Prostate gland (tissue), 2 donors: ENCODE measurements at regions of chr5 and their contacts with region 1.

Region 1: DNA sequence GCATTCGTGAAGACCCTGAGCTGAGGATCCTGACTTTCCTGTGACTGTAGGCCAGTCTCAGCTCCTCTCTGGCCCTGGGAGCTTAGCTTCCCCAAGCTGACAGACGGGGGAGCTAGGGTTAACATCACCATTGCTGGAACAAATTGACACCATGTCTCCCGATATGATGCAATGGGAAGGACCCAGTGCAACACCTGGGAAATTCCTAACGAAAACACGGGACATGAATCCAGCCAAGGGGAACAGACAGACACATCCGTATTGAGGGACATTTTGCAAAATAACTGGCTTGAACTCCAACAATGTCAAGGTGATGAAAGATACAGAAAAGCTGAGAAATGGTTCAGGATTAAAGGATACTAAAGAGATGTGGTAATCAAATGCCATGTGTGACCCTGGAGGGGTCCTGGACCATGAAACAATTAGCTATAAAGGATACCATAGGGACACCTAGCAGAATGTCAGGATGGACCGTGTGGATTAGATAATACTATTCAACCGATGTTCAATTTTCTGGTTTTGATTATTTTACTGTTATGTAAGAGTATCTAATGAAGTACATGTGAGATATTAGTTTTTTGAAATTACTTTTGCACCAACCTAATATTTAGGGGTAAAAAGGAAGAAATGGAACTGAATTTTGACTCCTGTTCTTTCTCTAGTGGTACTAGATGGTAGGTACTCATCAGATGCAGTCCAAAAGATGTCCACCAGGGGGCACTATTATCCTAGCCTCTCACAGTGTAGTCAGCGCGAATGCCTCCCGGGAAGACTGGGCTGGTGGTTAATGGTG is 52.7 kb downstream of the NDST1 start:
- DNase-seq: peak; percentile 91
- H3K4me3 ChIP-seq: no peak overlapping the region
- H3K27ac ChIP-seq: no peak overlapping the region
- H3K4me1 ChIP-seq: no peaks in the 10 kb centered on the region
- H3K27me3 ChIP-seq: no peaks in the 10 kb centered on the region
- CTCF ChIP-seq: peak; percentile 89 to 98 (median 94)
- POLR2A ChIP-seq: no peak

Region 2: DNA sequence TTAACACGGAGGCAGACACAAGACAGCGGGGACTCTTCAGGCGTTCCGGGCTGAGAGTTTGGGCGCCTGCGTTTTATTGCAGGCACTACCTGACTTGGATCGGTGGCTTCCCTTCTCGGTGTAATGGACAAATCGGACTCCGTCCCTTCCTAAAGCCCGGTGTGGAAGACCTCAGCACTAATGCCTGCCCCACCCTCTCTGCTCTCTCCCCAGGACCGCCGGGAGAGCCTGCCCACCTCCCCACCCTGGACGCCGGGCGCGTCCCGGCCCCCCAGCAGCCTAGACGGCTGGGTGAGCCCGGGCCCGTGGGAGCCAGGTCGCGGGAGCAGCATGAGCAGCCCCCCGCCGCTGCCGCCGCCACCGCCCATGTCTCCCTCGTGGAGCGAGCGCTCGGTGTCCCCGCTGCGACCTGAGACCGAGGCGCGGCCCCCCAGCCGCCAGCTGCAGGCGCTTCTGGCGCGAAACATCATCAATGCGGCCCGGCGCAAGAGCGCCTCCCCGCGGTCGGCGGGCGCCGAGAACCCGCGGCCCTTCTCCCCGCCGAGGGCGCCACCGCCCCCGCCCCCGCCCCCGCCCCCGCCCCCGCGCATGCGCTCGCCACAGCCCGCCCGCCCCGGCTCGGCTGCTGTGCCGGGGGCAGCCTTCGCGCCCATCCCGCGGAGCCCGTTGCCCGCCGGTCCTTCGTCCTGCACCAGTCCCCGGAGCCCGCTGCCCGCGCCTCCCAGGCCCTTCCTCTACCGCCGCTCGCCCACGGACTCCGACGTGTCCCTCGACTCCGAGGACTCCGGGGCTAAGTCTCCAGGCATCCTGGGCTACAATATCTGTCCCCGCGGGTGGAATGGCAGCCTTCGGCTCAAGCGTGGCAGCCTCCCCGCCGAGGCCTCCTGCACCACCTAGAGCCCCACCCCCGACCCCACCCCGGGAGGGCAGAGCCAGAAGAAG is 95.9 kb after region 1 on chr5:
- intact Hi-C with region 1: loop called (anchors 5 kb)
- DNase-seq: peak; percentile 58
- H3K4me3 ChIP-seq: peak overlapping the region; percentile 42 to 44
- H3K27ac ChIP-seq: peak overlapping the region; percentile 60 to 72
- H3K4me1 ChIP-seq: no peaks in the 10 kb centered on the region
- H3K27me3 ChIP-seq: no peaks in the 10 kb centered on the region
- CTCF ChIP-seq: peak; percentile 67 to 81 (median 74)
- POLR2A ChIP-seq: no peak

Region 3: GRCh38 chr5:150700594-150701293 is 140.1 kb after region 1 on chr5 and contains the start of gene RBM22:
- intact Hi-C with region 1: loop called (anchors 5 kb)
- DNase-seq: peak; percentile 91
- H3K4me3 ChIP-seq: peak within 1 kb of the TSS; percentile 96 to 97
- H3K27ac ChIP-seq: peak within 1 kb of the TSS; percentile 96 to 97
- H3K4me1 ChIP-seq: peaks cover 2% of the 10 kb centered on the region
- H3K27me3 ChIP-seq: no peaks in the 10 kb centered on the region
- CTCF ChIP-seq: peak; percentile 31 to 69 (median 60)
- POLR2A ChIP-seq: peak; percentile 73
- total RNA-seq, gene RBM22: 33.6 to 40.3 TPM

Region 4: DNA sequence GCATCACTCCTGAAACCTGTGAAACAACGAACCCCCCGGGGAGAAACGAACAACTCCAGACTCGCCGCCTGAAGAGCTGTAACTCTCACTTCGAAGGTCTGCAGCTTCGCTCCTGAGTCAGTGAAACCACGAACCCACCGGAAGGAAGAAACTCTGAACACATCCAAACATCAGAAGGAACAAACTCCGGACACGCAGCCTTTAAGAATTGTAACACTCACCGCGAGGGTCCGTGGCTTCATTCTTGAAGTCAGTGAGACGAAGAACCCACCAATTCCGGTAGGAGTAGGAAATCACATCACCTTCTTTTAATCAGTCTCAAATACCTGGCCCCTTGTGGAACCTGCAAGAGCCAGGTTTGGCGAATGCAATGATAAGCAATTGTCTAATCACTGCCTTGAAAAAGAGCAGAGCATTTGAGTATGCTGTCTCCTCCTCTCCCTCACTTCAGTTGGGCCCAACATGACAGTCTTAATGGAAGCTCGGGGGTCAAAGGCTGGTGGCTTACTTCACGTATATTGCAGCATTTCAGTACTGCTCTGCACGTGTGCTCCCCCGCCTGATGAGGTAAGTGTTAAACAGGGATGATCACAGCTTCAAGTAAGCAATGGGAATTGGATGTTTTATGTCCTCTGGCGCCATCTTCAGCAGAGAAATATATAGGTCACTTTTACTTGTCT is 286.2 kb after region 1 on chr5:
- intact Hi-C with region 1: loop called (anchors 5 kb)
- DNase-seq: peak; percentile 76
- H3K4me3 ChIP-seq: no peak overlapping the region
- H3K27ac ChIP-seq: no peak overlapping the region
- H3K4me1 ChIP-seq: no peaks in the 10 kb centered on the region
- H3K27me3 ChIP-seq: no peaks in the 10 kb centered on the region
- CTCF ChIP-seq: peak; percentile 13 to 85 (median 69)
- POLR2A ChIP-seq: no peak